HepG2 (cell line): ENCODE measurements at regions of chr4 and their contacts with region 1.

Region 1: DNA sequence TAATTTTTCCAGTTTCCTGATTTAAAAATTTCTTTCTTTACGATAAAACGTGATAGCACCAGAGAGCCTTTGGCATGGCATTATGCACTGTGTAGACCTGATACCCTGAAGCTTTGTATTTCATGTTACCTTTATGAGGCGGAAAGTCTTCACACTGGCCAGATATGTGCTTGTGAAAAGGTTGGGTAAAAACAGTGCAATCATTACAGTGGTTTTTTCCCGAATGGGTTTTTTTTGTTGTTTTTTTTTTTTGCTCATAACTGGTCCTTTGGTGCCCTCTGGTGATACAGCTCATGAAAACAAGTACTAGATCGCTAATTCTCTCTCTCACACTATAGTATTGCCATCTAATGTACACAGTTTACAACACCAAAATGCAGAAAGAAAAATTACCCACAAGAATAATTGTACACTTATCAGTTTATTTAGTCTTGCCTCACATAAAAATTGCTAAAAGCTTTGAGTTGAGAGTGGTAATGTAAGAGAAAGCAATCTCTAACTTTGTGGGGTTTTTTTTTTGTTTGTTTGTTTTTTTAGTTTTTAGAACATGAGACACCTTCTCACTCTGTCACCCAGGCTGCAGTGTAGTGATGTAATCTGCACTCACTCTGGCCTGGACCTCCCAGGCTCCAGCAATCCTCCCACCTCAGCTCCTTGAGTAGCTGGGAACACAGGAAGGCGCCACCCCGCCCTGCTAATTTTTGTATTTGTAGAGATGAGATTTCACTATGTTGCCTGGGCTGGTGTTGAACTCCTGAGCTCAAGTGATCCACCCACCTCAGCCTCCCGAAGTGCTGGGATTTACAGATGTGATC is 21.3 kb downstream of the SPCS3 start:
- DNase-seq: peak; percentile 24
- ATAC-seq: peak; percentile 75
- H3K4me3 ChIP-seq: no peak overlapping the region
- H3K27ac ChIP-seq: no peak overlapping the region
- H3K4me1 ChIP-seq: no peaks in the 10 kb centered on the region
- H3K27me3 ChIP-seq: no peaks in the 10 kb centered on the region
- CTCF ChIP-seq: peak; percentile 51
- EP300 ChIP-seq: no peak
- POLR2A ChIP-seq: no peak
- RAD21 ChIP-seq: no peak

Region 2: DNA sequence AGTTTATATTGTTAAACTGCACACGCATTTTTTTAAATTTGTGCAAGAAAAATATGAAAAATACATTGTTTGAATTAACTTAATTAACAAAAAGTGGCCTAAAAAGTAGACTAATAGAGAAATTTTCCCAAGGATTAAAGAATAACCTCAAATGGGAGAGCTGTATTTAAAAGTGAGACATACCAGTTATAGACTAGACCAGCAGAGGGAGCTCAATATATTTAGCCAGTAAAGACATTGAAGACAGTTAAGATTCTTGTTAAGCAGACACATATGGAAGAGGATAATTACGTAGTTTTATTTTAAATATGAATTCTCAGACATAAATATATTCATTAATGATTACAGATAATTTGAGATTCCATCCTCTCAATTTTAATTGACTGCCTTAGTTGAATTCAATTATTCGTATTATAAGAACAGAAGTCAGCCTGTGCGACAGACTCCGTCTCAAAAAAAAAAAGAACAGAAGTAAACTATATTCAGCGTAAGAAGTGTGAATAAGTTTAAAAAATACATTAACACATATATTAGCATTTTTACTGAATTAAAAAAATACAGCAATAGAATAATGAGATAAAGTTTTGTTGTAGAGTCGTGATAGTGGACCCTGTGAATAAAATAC is 1576.9 kb before region 1 on chr4:
- CTCF ChIA-PET with region 1: no interaction called
- POLR2A ChIA-PET with region 1: no interaction called
- in situ Hi-C with region 1: no loop called
- intact Hi-C with region 1: loop called (anchors 10 kb)
- DNase-seq: peak; percentile 29
- ATAC-seq: peak; percentile 71
- H3K4me3 ChIP-seq: no peak overlapping the region
- H3K27ac ChIP-seq: no peak overlapping the region
- H3K4me1 ChIP-seq: no peaks in the 10 kb centered on the region
- H3K27me3 ChIP-seq: no peaks in the 10 kb centered on the region
- CTCF ChIP-seq: peak; percentile 56
- EP300 ChIP-seq: no peak
- POLR2A ChIP-seq: no peak
- RAD21 ChIP-seq: no peak

Region 3: GRCh38 chr4:175947117-175947722 is 393.9 kb before region 1 on chr4:
- CTCF ChIA-PET with region 1: interaction called, 7 read pairs
- POLR2A ChIA-PET with region 1: no interaction called
- in situ Hi-C with region 1: loop called (anchors 25 kb)
- intact Hi-C with region 1: loop called (anchors 1 kb)
- DNase-seq: peak; percentile 6
- ATAC-seq: no peak
- H3K4me3 ChIP-seq: no peak overlapping the region
- H3K27ac ChIP-seq: no peak overlapping the region
- H3K4me1 ChIP-seq: no peaks in the 10 kb centered on the region
- H3K27me3 ChIP-seq: no peaks in the 10 kb centered on the region
- CTCF ChIP-seq: peak; percentile 23; the same call in 1 of the 2 replicates
- EP300 ChIP-seq: no peak
- POLR2A ChIP-seq: no peak
- RAD21 ChIP-seq: no peak

Region 4: GRCh38 chr4:176034499-176034898 is 306.6 kb before region 1 on chr4:
- CTCF ChIA-PET with region 1: no interaction called
- POLR2A ChIA-PET with region 1: no interaction called
- in situ Hi-C with region 1: loop called (anchors 25 kb)
- intact Hi-C with region 1: loop called (anchors 1 kb)
- DNase-seq: no peak
- ATAC-seq: no peak
- H3K4me3 ChIP-seq: no peak overlapping the region
- H3K27ac ChIP-seq: no peak overlapping the region
- H3K4me1 ChIP-seq: no peaks in the 10 kb centered on the region
- H3K27me3 ChIP-seq: no peaks in the 10 kb centered on the region
- CTCF ChIP-seq: peak; percentile 35
- EP300 ChIP-seq: no peak
- POLR2A ChIP-seq: no peak
- RAD21 ChIP-seq: no peak

Region 5: GRCh38 chr4:176137631-176138030 is 203.4 kb before region 1 on chr4:
- CTCF ChIA-PET with region 1: no interaction called
- POLR2A ChIA-PET with region 1: no interaction called
- in situ Hi-C with region 1: loop called (anchors 25 kb)
- intact Hi-C with region 1: no loop called
- DNase-seq: no peak
- ATAC-seq: no peak
- H3K4me3 ChIP-seq: no peak overlapping the region
- H3K27ac ChIP-seq: no peak overlapping the region
- H3K4me1 ChIP-seq: no peaks in the 10 kb centered on the region
- H3K27me3 ChIP-seq: no peaks in the 10 kb centered on the region
- CTCF ChIP-seq: no peak
- EP300 ChIP-seq: no peak
- POLR2A ChIP-seq: no peak
- RAD21 ChIP-seq: no peak

Region 6: GRCh38 chr4:176150356-176150682 is 190.8 kb before region 1 on chr4:
- CTCF ChIA-PET with region 1: no interaction called
- POLR2A ChIA-PET with region 1: no interaction called
- in situ Hi-C with region 1: loop called (anchors 25 kb)
- intact Hi-C with region 1: loop called (anchors 1 kb)
- DNase-seq: peak; percentile 5
- ATAC-seq: no peak
- H3K4me3 ChIP-seq: no peak overlapping the region
- H3K27ac ChIP-seq: no peak overlapping the region
- H3K4me1 ChIP-seq: no peaks in the 10 kb centered on the region
- H3K27me3 ChIP-seq: no peaks in the 10 kb centered on the region
- CTCF ChIP-seq: no peak
- EP300 ChIP-seq: no peak
- POLR2A ChIP-seq: no peak
- RAD21 ChIP-seq: no peak

Region 7: DNA sequence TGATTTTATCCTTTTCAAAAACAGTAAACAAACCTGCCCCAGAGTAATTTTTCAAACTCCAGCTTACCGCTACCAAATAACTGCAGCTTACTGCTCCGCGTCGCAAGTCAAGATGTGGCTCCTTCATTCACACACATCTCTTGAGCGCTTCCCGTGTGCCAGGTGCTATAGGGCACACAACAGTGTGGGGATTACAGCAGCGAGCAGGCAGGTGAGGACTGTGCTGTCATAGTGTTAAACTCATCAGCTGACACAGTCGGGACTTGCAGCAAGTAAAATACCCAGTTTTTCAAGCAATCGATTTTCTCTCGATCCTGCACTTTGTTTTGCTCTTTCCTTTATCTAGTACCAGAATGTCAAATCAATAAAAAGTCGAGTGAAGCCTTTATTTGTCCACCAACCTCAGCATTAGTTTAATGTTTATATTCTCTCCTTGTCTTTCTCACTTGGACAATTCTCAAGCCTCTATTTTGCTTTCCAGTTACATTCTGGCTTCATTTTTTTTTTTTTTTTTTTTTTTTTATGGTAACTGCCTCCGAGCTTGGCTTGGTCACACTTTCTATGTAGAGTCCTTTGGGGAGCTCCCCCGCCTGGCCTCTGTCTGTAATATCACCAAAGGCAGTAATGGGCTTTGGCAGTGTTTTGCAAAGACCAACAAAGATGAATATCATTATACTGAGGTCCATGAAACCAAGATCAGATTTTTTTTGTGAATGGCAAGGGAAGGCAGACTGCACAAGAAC is 63.7 kb before region 1 on chr4:
- CTCF ChIA-PET with region 1: no interaction called
- POLR2A ChIA-PET with region 1: no interaction called
- in situ Hi-C with region 1: no loop called
- intact Hi-C with region 1: loop called (anchors 1 kb)
- DNase-seq: peak; percentile 39
- ATAC-seq: peak; percentile 100
- H3K4me3 ChIP-seq: peak overlapping the region in 2 of 3 experiments; percentile 18 to 34; a peak in 2 of 6 replicates
- H3K27ac ChIP-seq: no peak overlapping the region
- H3K4me1 ChIP-seq: peaks cover 8% of the 10 kb centered on the region
- H3K27me3 ChIP-seq: peaks cover 0 to 4% of the 10 kb centered on the region in 2 experiments; a peak in 1 of 5 replicates
- CTCF ChIP-seq: peak; percentile 52
- EP300 ChIP-seq: no peak
- POLR2A ChIP-seq: no peak
- RAD21 ChIP-seq: no peak